AG04449 (cell line): ENCODE measurements at regions of chr19 and their contacts with region 1.

Region 1: GRCh38 chr19:2950286-2951124 is 5.7 kb upstream of the ZNF77 start:
- DNase-seq: peak; percentile 95
- H3K4me3 ChIP-seq: peak overlapping the region; percentile 94
- CTCF ChIP-seq: no peak

Region 2: DNA sequence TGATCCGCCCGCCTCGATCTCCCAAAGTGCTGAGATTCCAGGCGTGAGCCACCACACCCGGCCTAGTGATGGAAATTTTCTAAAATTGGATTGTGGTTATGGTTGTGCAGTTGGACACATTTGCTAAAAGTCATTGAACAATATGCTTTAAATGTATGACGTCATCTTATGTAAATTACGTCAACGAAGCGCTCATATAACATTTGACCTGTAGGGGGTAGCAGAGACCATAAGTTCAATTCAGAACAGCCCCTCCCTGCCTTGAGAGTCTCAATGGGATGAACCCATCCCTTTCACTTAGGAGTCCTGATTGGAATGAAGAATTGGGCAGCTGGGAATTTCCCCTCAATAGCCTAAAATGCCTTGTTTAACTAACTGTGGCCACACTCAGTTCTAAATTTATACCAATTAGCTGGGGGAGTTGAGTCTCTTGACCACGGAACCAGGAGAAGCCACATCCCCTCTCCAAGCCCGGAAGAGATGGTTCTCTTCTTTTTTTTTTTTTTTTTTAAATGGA is 11.6 kb after region 1 on chr19:
- CTCF ChIA-PET with region 1: interaction called, 36 read pairs
- POLR2A ChIA-PET with region 1: interaction called, 5 read pairs
- DNase-seq: no peak
- H3K4me3 ChIP-seq: peak overlapping the region; percentile 12; the same call in 1 of the 2 replicates
- CTCF ChIP-seq: peak; percentile 43

Region 3: DNA sequence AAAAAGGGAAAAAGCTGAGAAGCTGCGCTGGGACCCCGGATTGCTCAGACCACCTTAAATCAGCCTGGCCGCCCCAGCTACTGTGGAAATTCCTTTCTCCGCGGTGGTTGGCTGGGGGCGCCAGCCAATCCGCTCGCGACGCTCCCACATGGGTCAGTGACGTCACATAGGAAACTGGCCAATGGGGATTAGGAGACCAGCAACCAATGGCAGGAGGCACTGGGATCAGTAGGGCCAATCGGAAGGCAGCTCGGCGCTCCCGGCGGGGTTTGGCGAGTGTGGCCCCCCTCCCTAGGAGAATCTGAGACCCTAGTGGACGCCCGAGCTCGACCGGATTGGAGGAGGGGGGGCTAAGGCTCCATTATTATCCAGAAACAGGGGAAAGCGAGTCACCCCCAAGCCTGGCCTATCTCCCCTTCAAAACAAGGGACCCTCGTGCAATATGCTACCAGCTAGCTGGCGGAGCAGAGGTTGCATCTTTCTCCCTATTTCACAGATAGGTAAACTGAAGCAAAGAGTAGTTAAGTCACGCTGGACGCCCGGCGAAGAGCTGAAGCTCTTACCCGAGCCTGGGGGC is 85.1 kb after region 1 on chr19:
- CTCF ChIA-PET with region 1: interaction called, 13 read pairs
- POLR2A ChIA-PET with region 1: interaction called, 4 read pairs
- DNase-seq: peak; percentile 86
- H3K4me3 ChIP-seq: peak overlapping the region; percentile 61
- CTCF ChIP-seq: no peak

Region 4: GRCh38 chr19:3075895-3076431 is 125.5 kb after region 1 on chr19:
- CTCF ChIA-PET with region 1: interaction called, 11 read pairs
- POLR2A ChIA-PET with region 1: no interaction called
- DNase-seq: no peak
- H3K4me3 ChIP-seq: peak overlapping the region; percentile 42
- CTCF ChIP-seq: peak; percentile 93

Region 5: GRCh38 chr19:3163230-3163886 is 212.9 kb after region 1 on chr19:
- CTCF ChIA-PET with region 1: interaction called, 127 read pairs
- POLR2A ChIA-PET with region 1: no interaction called
- DNase-seq: no peak
- H3K4me3 ChIP-seq: no peak overlapping the region
- CTCF ChIP-seq: peak; percentile 90

Region 6: GRCh38 chr19:3185482-3186376 is 235.2 kb after region 1 on chr19 and contains the start of gene NCLN:
- CTCF ChIA-PET with region 1: interaction called, 14 read pairs
- POLR2A ChIA-PET with region 1: interaction called, 4 read pairs
- DNase-seq: peak; percentile 53
- H3K4me3 ChIP-seq: peak within 1 kb of the TSS; percentile 86
- CTCF ChIP-seq: no peak